Activated CD4-positive, alpha-beta T cell treated with anti-CD3 and anti-CD28 coated beads for 36 hours (primary cell): ENCODE measurements at regions of chr20 and their contacts with region 1.

Region 1: DNA sequence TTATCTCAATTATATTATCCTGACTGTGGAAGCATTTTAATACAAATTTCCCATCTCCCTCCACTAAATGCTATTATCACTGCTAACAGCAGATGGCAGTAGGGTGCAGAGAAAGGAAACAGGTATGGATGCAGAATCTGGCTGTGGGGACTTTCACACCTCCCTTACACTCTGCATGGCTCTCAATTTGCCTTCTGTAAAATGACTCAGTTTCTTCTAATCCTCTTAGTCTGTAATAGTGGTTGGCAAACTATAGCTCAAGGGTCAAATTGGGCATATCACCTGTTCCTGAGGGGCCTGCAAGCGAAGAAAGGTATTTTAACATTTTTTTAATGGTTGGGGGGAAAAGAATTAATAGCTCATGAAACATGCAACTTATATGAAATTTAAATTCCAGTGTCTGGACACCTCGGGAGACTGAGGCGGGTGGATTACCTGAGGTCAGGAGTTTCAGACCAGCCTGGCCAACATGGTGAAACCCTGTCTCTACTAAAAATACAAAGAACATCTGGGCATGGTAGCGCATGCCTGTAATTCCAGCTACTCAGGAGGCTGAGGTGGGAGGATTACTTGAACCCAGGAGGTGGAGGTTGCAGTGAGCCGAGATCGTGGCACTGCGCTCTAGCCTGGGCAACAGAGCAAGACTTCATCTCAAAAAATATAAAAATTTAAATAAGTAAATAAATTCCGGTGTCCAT is 83.5 kb downstream of the ZMYND8 start:
- DNase-seq: peak; percentile 64
- ATAC-seq: peak; percentile 69
- H3K4me3 Mint-ChIP-seq: no peak overlapping the region
- H3K27ac Mint-ChIP-seq: peak overlapping the region; percentile 88
- H3K4me1 Mint-ChIP-seq: peaks cover 44% of the 10 kb centered on the region
- H3K27me3 Mint-ChIP-seq: no peaks in the 10 kb centered on the region

Region 2: DNA sequence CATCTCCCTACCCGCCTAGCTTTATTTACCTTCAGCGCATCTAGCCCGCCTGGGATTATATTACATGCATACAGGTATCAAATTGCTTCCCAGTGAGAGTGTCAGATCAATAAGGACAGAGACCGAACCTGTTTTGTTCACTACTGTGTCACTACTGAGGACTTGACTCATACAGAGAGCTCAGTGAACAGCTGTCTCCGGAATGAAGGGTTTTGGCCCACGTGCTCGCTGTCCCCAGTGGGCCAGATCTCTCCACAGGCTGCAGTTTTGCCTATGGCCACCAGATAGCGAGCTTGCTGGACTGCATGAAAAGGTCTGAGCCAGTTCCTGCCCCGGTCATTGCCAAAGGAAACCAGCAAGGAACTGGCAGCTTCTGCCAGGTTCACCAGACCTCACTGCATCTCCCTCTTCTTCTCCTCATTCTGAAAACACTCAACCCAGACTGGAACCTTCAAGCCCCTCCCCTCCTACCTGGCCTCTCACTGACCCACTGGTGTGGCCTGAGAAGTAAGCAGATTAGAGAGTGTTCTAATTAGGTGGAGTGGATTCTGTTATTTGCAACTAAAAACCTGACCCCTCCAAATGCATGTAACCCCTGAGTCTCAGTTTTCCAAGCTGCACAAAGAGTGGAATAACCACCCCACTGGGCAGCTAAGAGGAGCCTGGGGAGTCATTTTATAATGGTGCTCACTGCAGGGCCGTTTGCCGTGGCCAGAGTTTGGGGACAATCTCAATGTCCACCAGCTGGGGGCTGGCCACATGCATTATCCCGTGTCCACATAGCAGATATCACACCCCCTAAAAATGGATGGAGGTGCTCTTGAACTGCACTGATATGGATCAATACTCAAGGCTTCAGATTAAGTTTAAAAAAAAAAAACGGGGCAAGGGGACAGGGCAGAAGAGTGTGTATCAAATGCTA is 67.2 kb before region 1 on chr20:
- CTCF ChIA-PET with region 1: interaction called, 14 read pairs
- POLR2A ChIA-PET with region 1: no interaction called
- intact Hi-C with region 1: no loop called
- DNase-seq: peak; percentile 82
- ATAC-seq: peak; percentile 88
- H3K4me3 Mint-ChIP-seq: no peak overlapping the region
- H3K27ac Mint-ChIP-seq: no peak overlapping the region
- H3K4me1 Mint-ChIP-seq: peaks cover 6% of the 10 kb centered on the region
- H3K27me3 Mint-ChIP-seq: no peaks in the 10 kb centered on the region

Region 3: GRCh38 chr20:47348539-47349142 is 75.6 kb after region 1 on chr20:
- CTCF ChIA-PET with region 1: interaction called, 59 read pairs
- POLR2A ChIA-PET with region 1: no interaction called
- intact Hi-C with region 1: no loop called
- DNase-seq: no peak
- ATAC-seq: no peak
- H3K4me3 Mint-ChIP-seq: no peak overlapping the region
- H3K27ac Mint-ChIP-seq: no peak overlapping the region
- H3K4me1 Mint-ChIP-seq: peaks cover 34% of the 10 kb centered on the region
- H3K27me3 Mint-ChIP-seq: no peaks in the 10 kb centered on the region

Region 4: DNA sequence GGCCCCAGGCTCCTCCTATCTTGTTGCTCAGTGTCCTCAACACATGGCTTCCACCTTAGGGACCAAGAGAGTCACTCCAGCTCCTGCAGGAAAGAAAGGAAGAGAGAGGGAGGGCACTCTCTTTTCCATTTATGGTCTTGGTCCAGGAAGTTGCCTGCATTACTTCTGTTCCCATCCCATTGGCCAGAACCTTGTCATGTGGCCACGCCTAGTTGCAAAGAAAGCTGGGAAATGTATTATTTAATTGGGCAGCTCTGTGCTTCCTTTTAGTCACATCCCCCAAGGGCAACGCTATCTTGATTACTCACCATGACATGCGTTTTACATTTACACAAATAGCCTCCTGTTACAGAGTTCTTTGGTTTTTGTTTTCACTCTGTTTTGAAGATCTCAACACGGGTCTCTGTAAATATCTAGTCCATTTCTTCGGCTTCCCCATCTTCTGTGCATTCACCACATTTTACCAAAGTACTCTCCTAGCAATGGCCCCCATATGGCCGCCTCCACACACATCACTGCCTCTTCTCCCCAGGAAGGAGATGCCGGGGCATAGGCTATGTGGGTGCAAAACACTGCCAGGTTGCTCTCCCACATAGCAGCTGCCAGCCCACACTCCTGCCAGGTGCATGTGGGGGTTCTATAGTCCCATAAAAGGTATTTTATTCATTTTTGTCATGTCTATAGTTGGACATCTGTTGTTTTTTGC is 119.1 kb after region 1 on chr20:
- CTCF ChIA-PET with region 1: interaction called, 411 read pairs
- POLR2A ChIA-PET with region 1: no interaction called
- intact Hi-C with region 1: no loop called
- DNase-seq: peak; percentile 37
- ATAC-seq: peak; percentile 87
- H3K4me3 Mint-ChIP-seq: no peak overlapping the region
- H3K27ac Mint-ChIP-seq: peak overlapping the region; percentile 69
- H3K4me1 Mint-ChIP-seq: peaks cover 18% of the 10 kb centered on the region
- H3K27me3 Mint-ChIP-seq: no peaks in the 10 kb centered on the region

Region 5: DNA sequence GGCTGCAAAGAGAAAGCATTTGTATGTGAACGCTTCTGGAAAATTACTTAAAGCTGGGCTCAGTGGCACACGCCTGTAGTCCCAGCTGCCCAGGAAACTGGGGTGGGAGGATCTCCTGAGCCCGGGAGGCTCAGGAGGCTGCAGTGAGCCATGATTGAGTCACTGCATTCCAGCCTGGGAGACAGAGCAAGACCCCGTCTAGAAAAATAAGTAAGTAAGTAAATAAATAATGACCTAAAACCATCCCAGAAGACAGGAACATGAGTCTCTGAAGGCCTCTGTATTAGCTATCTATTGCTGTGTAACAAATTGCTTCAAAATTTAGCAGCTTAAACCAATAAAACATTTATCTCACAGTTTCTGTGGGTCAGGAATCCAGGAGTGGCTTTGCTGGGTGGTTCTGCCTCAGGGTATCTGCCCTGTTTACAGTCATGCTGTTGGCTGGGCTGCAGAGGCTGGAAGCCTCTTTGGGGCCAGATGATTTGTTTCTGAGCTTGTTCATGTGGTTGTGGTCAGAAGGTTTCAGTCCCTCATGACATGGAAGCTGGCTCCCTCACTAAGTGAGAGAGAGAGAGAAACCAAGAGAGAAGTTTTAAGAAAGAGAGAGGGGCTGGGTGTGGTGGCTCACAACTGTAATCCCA is 180.2 kb after region 1 on chr20:
- CTCF ChIA-PET with region 1: interaction called, 6 read pairs
- POLR2A ChIA-PET with region 1: no interaction called
- intact Hi-C with region 1: loop called in 1 of 2 experiments (anchors 10 kb)
- DNase-seq: peak; percentile 74
- ATAC-seq: peak; percentile 84
- H3K4me3 Mint-ChIP-seq: no peak overlapping the region
- H3K27ac Mint-ChIP-seq: peak overlapping the region; percentile 73
- H3K4me1 Mint-ChIP-seq: peaks cover 38% of the 10 kb centered on the region
- H3K27me3 Mint-ChIP-seq: no peaks in the 10 kb centered on the region

Region 6: GRCh38 chr20:47501483-47502270 is 228.6 kb after region 1 on chr20 and contains the start of gene NCOA3:
- CTCF ChIA-PET with region 1: interaction called, 6 read pairs
- POLR2A ChIA-PET with region 1: no interaction called
- intact Hi-C with region 1: loop called (anchors 5 kb)
- DNase-seq: peak; percentile 98
- ATAC-seq: peak; percentile 82
- H3K4me3 Mint-ChIP-seq: peak within 1 kb of the TSS; percentile 99
- H3K27ac Mint-ChIP-seq: peak within 1 kb of the TSS; percentile 95
- H3K4me1 Mint-ChIP-seq: peaks cover 58% of the 10 kb centered on the region
- H3K27me3 Mint-ChIP-seq: no peaks in the 10 kb centered on the region
- total RNA-seq, gene NCOA3: 76.4 to 83.4 TPM

Region 7: DNA sequence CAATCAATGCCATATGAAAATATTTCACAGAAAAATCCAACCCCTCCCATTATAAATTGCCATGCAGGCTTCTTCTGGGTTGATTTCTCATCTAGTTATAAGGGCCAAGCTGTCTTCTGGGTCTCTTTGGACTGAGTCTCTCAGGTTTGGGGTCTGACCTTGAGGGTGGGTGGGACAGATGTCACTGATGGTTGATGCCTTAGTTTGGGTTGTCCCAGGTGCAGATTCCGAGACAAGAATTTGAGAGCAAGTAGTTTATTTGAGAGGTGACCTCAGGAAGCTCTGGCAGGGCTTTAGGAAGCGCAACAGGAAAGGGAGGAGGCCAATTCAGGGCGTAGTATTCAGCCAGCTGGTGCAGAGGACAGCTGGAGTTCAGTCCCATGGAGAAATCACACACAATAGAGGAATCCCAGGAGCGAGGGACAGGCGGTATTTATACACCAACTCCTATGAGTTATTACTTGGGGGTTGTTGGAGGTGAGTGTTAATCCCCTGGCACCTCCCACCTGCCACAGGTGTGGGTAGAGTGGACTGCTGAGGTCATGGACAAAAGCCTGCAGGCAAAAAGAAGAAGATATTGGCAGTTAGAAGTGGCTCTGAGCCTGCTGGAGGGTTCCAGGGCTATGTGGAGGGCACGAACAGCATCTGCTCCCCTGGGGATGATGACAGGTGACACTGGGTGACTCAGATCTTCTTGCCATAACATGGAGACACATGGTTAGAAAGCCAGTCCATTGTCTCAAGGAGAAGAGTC is 526.0 kb after region 1 on chr20:
- CTCF ChIA-PET with region 1: no interaction called
- POLR2A ChIA-PET with region 1: no interaction called
- intact Hi-C with region 1: no loop called
- DNase-seq: no peak
- ATAC-seq: no peak
- H3K4me3 Mint-ChIP-seq: no peak overlapping the region
- H3K27ac Mint-ChIP-seq: no peak overlapping the region
- H3K4me1 Mint-ChIP-seq: no peaks in the 10 kb centered on the region
- H3K27me3 Mint-ChIP-seq: no peaks in the 10 kb centered on the region